Activated CD4-positive, alpha-beta T cell treated with anti-CD3 and anti-CD28 coated beads for 36 hours (primary cell): ENCODE measurements at regions of chr17 and their contacts with region 1.

Region 1: GRCh38 chr17:4263282-4264215 is at the start of gene ANKFY1:
- DNase-seq: peak; percentile 99
- ATAC-seq: peak; percentile 99
- H3K4me3 Mint-ChIP-seq: peak within 1 kb of the TSS; percentile 97
- H3K27ac Mint-ChIP-seq: peak within 1 kb of the TSS; percentile 96
- H3K4me1 Mint-ChIP-seq: peaks cover 35% of the 10 kb centered on the region
- H3K27me3 Mint-ChIP-seq: no peaks in the 10 kb centered on the region
- total RNA-seq, gene ANKFY1: 39.8 to 40.7 TPM

Region 2: DNA sequence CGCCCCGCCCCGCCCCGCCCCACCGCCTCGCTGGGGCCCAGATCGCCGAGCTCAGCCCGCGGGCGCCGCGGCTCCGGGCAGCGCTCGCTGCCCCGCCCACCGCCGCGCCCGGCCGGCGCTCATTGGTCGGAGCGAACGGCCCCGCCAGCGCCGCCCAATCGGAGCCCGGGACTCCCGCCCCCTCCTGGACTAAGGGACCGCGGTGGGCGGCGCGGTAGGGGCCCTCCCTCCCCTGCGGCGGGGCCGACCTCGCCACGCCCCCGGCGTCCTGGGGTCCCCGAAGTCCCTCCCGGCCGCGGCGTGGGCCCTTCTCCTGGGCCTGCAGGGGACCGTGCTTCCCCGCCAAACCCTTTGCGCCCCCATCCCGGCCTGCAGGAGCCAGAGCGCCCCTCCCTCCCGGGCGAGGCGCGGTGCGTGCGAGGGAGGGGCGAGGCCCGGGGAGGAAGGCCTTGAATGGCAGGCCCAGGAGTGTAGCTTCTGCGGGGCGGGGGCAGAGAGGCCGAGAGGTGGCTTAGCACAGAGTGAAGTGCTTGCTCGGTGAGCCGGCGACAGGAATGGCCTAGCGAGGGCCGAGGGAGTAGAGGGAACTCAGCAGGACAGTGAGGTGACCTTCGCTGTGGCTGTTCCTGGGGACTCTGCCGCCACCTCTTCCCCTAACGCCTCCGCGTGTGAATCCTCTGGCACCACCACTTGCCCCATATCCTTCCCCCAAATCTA is 370.4 kb before region 1 on chr17 and contains the start of gene CAMKK1:
- CTCF ChIA-PET with region 1: no interaction called
- POLR2A ChIA-PET with region 1: no interaction called
- intact Hi-C with region 1: loop called in 1 of 2 experiments (anchors 5 kb)
- DNase-seq: peak; percentile 94
- ATAC-seq: peak; percentile 88
- H3K4me3 Mint-ChIP-seq: peak within 1 kb of the TSS; percentile 76
- H3K27ac Mint-ChIP-seq: peak within 1 kb of the TSS; percentile 77
- H3K4me1 Mint-ChIP-seq: peaks cover 36% of the 10 kb centered on the region
- H3K27me3 Mint-ChIP-seq: no peaks in the 10 kb centered on the region
- total RNA-seq, gene CAMKK1: 4.5 to 5.4 TPM

Region 3: GRCh38 chr17:4236456-4236855 is 27.1 kb before region 1 on chr17:
- CTCF ChIA-PET with region 1: no interaction called
- POLR2A ChIA-PET with region 1: no interaction called
- intact Hi-C with region 1: no loop called
- DNase-seq: no peak
- ATAC-seq: no peak
- H3K4me3 Mint-ChIP-seq: no peak overlapping the region
- H3K27ac Mint-ChIP-seq: no peak overlapping the region
- H3K4me1 Mint-ChIP-seq: peaks cover 17% of the 10 kb centered on the region
- H3K27me3 Mint-ChIP-seq: no peaks in the 10 kb centered on the region

Region 4: DNA sequence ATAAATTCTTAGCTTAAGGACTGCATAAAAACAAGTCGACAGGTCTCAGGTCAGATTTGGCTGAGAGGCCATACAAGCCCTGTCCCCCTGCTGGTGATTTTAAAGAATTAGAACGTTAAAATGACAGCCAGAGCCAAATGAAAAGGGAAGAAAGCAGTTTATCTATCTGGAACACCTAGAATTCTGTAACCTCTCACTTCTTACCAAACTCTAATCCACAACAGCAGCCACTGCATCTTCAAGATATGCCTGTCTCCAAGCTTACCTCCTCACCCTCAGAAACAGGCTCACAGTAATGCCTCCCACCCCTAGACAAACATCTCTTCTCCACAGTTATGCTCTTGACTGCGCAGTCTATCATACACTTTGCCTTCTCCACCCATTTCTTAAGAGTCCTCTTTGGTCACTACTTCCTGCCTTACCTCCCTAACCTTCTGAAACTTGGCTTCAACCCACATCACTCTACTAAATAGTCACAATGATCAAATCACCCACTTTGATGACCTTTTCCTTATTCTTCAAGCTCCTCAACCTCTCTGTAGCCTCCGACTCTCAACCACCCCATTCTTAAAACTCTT is 14.0 kb before region 1 on chr17:
- CTCF ChIA-PET with region 1: interaction called, 40 read pairs
- POLR2A ChIA-PET with region 1: interaction called, 3 read pairs
- intact Hi-C with region 1: no loop called
- DNase-seq: no peak
- ATAC-seq: no peak
- H3K4me3 Mint-ChIP-seq: no peak overlapping the region
- H3K27ac Mint-ChIP-seq: no peak overlapping the region
- H3K4me1 Mint-ChIP-seq: peaks cover 42% of the 10 kb centered on the region
- H3K27me3 Mint-ChIP-seq: no peaks in the 10 kb centered on the region

Region 5: GRCh38 chr17:4329838-4330237 is 66.3 kb after region 1 on chr17:
- CTCF ChIA-PET with region 1: no interaction called
- POLR2A ChIA-PET with region 1: no interaction called
- intact Hi-C with region 1: no loop called
- DNase-seq: no peak
- ATAC-seq: peak; percentile 43
- H3K4me3 Mint-ChIP-seq: no peak overlapping the region
- H3K27ac Mint-ChIP-seq: peak overlapping the region; percentile 33
- H3K4me1 Mint-ChIP-seq: peaks cover 61% of the 10 kb centered on the region
- H3K27me3 Mint-ChIP-seq: no peaks in the 10 kb centered on the region

Region 6: GRCh38 chr17:4554997-4555799 is 291.6 kb after region 1 on chr17 and contains the start of gene MYBBP1A:
- CTCF ChIA-PET with region 1: no interaction called
- POLR2A ChIA-PET with region 1: no interaction called
- intact Hi-C with region 1: loop called in 1 of 2 experiments (anchors 5 kb)
- DNase-seq: peak; percentile 99
- ATAC-seq: peak; percentile 97
- H3K4me3 Mint-ChIP-seq: peak within 1 kb of the TSS; percentile 93
- H3K27ac Mint-ChIP-seq: peak within 1 kb of the TSS; percentile 96
- H3K4me1 Mint-ChIP-seq: peaks cover 21% of the 10 kb centered on the region
- H3K27me3 Mint-ChIP-seq: no peaks in the 10 kb centered on the region
- total RNA-seq, gene MYBBP1A: 97.7 to 144 TPM